AG04449 (cell line): ENCODE measurements at regions of chr20 and their contacts with region 1.

Region 1: DNA sequence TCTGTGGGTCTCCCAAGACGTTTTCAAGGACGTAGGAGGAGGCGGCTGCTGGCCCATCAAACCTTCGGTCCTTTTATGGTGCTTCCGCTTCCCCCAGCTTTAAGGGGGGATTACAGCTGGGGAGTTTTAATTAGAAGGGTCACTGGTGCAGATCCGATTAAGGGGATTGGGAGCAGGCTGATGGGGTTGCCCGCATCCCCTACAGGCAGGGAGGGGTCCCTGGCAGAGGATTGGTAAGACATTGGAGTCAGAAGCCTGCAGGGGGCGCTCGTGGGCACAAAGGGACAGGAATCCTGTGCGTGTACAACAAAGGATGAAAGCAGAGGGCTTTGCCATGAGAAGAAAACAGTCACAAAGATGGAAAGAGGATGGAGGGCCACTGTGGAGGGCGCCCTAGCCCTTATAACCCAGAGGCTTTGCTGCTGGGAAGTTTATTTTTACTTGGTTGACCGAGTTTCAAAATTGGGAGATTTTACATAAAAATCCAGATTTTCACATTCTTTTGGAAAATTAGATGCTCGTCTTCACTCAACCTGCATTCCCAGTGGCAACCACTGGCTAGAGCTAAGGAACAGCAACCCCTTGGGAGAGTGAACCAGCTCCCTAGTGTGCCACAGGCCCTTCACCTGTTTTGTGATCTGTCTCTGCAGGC is 97.9 kb downstream of the KCNB1 start:
- DNase-seq: no peak
- H3K4me3 ChIP-seq: no peak overlapping the region
- CTCF ChIP-seq: peak; percentile 60

Region 2: GRCh38 chr20:49372095-49372726 is 12.4 kb before region 1 on chr20:
- CTCF ChIA-PET with region 1: interaction called, 36 read pairs
- POLR2A ChIA-PET with region 1: no interaction called
- DNase-seq: no peak
- H3K4me3 ChIP-seq: no peak overlapping the region
- CTCF ChIP-seq: no peak

Region 3: DNA sequence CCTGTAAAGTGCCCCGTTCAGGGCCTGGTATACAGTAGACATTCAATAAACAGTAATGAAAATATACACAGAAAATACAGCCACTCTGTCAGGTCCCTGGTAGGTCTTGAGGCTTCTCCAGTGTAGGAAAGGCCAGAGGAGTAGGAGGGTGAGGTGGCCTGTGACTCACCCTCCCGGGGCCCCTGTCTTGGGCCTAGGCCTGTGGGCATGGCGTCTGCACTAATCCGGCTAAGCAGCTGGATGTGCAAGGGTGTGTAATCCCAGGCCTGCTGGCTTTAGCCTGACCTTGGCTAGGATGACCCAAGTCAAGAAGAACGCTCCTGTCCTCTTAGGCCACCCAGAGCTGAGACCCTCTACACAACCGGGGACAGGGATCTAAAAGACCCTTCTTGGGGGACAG is 13.0 kb after region 1 on chr20:
- CTCF ChIA-PET with region 1: interaction called, 54 read pairs
- POLR2A ChIA-PET with region 1: no interaction called
- DNase-seq: no peak
- H3K4me3 ChIP-seq: no peak overlapping the region
- CTCF ChIP-seq: no peak

Region 4: GRCh38 chr20:49422161-49422560 is 37.6 kb after region 1 on chr20:
- CTCF ChIA-PET with region 1: no interaction called
- POLR2A ChIA-PET with region 1: no interaction called
- DNase-seq: no peak
- H3K4me3 ChIP-seq: no peak overlapping the region
- CTCF ChIP-seq: no peak